ENCODE measurements at regions of chr1 and their contacts with region 1.

Region 1: GRCh38 chr1:205812878-205813754 is at the start of gene SLC41A1:
- DNase-seq: peak; percentile 88 to 96
- ATAC-seq: peak; percentile 93 to 98 (median 95)
- H3K4me3 ChIP-seq: peak within 1 kb of the TSS; percentile 91
- H3K4me3 Mint-ChIP-seq: peak within 1 kb of the TSS; percentile 91
- H3K27ac ChIP-seq: peak within 1 kb of the TSS; percentile 67
- H3K27ac Mint-ChIP-seq: peak within 1 kb of the TSS; percentile 85 to 88
- H3K4me1 ChIP-seq: peaks cover 37% of the 10 kb centered on the region
- H3K4me1 Mint-ChIP-seq: peaks cover 52 to 53% of the 10 kb centered on the region in 2 donors
- H3K27me3 ChIP-seq: no peaks in the 10 kb centered on the region
- H3K27me3 Mint-ChIP-seq: no peaks in the 10 kb centered on the region
- CTCF ChIP-seq: no peak
- total RNA-seq, gene SLC41A1: 35.3 to 47.1 (median 39.5) TPM

Region 2: DNA sequence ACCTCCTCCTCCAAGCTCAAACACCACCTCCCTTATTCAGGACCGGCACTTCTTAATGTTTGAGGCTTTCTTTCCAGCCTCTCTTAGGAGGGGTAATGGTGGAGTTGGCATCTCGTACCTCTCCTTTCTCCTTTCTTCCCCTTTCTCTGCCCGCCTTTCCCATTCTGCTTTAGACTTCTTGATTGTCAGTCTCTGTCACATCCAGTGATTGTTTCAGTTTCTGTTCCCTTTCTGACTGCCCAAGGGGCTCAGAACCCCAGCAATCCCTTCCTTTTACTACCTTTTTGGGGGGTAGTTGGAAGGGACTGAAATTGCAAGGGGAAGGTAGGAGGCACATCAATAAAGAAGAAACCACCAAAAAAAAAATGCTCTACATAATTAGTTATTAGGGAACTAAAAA is 186.9 kb before region 1 on chr1:
- intact Hi-C with region 1: no loop called
- DNase-seq: no peak
- ATAC-seq: no peak
- H3K4me3 ChIP-seq: no peak overlapping the region
- H3K4me3 Mint-ChIP-seq: no peak overlapping the region
- H3K27ac ChIP-seq: peak overlapping the region; percentile 33
- H3K27ac Mint-ChIP-seq: peak overlapping the region; percentile 73 to 84
- H3K4me1 ChIP-seq: peaks cover 24% of the 10 kb centered on the region
- H3K4me1 Mint-ChIP-seq: peaks cover 52 to 54% of the 10 kb centered on the region in 2 donors
- H3K27me3 ChIP-seq: no peaks in the 10 kb centered on the region
- H3K27me3 Mint-ChIP-seq: no peaks in the 10 kb centered on the region
- CTCF ChIP-seq: no peak

Region 3: GRCh38 chr1:205714197-205714905 is 98.8 kb before region 1 on chr1:
- intact Hi-C with region 1: no loop called
- DNase-seq: no peak
- ATAC-seq: no peak
- H3K4me3 ChIP-seq: no peak overlapping the region
- H3K4me3 Mint-ChIP-seq: no peak overlapping the region
- H3K27ac ChIP-seq: no peak overlapping the region
- H3K27ac Mint-ChIP-seq: peak overlapping the region; percentile 54 to 58
- H3K4me1 ChIP-seq: no peaks in the 10 kb centered on the region
- H3K4me1 Mint-ChIP-seq: peaks cover 6 to 26% of the 10 kb centered on the region in 2 donors
- H3K27me3 ChIP-seq: no peaks in the 10 kb centered on the region
- H3K27me3 Mint-ChIP-seq: no peaks in the 10 kb centered on the region
- CTCF ChIP-seq: no peak

Region 4: DNA sequence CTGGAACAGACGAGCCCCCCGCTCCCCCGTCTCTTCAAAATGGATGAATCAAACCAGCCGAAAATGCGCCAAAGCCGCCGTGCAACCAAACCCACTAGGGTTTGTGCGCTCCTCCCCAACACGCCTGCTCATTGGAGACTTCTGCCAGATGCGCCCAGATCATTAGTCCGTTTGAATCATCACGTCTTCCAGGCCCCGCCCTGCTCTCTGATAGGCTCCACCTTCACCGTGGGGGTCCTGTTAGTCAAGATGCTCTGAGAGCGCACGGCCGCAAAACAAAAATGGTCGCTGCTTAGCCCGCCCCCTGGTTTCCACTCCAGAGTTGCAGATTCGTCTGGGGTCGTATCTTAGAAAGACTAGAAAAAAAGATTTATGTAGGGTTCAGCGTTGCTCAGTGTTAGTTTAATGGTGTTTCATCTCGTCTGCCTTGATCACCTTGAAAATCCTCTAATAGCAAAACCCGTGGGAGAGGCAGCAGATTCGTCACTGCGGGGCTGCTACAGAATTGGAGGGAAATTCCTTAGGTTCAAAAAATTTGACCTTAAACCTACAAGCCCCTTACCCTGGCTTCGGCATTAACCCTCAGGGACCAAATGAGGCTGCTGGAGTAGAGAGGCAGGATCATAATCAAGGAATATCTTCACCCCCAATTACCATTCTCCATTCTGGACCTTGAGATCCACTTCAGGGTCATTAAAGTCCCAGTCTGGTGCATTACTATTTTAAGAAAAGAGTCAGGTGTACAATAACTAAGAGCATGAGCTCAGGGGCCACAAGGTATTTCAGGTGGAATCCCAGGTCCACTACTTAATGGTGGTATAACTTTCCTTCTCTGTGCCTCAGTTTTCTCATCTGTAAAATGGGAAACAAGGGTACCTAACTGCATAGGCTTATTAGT is 62.7 kb before region 1 on chr1 and contains the start of gene NUCKS1:
- intact Hi-C with region 1: loop called (anchors 1 kb)
- DNase-seq: peak; percentile 93 to 99
- ATAC-seq: peak; percentile 74 to 87 (median 77)
- H3K4me3 ChIP-seq: peak within 1 kb of the TSS; percentile 70
- H3K4me3 Mint-ChIP-seq: peak within 1 kb of the TSS; percentile 100
- H3K27ac ChIP-seq: peak within 1 kb of the TSS; percentile 86
- H3K27ac Mint-ChIP-seq: peak within 1 kb of the TSS; percentile 90 to 97
- H3K4me1 ChIP-seq: peaks cover 7% of the 10 kb centered on the region
- H3K4me1 Mint-ChIP-seq: peaks cover 26 to 35% of the 10 kb centered on the region in 2 donors
- H3K27me3 ChIP-seq: no peaks in the 10 kb centered on the region
- H3K27me3 Mint-ChIP-seq: no peaks in the 10 kb centered on the region
- CTCF ChIP-seq: no peak
- total RNA-seq, gene NUCKS1: 89.2 to 113 (median 103) TPM

Region 5: GRCh38 chr1:205849619-205850355 is 36.7 kb after region 1 on chr1 and contains the start of gene PM20D1:
- intact Hi-C with region 1: loop called (anchors 1 kb)
- DNase-seq: peak; percentile 75 to 92
- ATAC-seq: peak in 2 of 3 donors; percentile 95 to 98
- H3K4me3 ChIP-seq: peak within 1 kb of the TSS; percentile 47
- H3K4me3 Mint-ChIP-seq: no peak within 1 kb of the TSS
- H3K27ac ChIP-seq: peak within 1 kb of the TSS; percentile 69
- H3K27ac Mint-ChIP-seq: peak within 1 kb of the TSS in 1 of 2 donors; percentile 82
- H3K4me1 ChIP-seq: peaks cover 10% of the 10 kb centered on the region
- H3K4me1 Mint-ChIP-seq: peaks cover 0 to 13% of the 10 kb centered on the region in 2 donors
- H3K27me3 ChIP-seq: no peaks in the 10 kb centered on the region
- H3K27me3 Mint-ChIP-seq: peaks cover 0 to 3% of the 10 kb centered on the region in 2 donors
- CTCF ChIP-seq: no peak
- total RNA-seq, gene PM20D1: 1.1 to 1.6 TPM in 2 of 3 donors, not detected in the other

Measured in natural killer cell (primary cell).